Spleen (tissue), 13 donors: ENCODE measurements at regions of chr9 and their contacts with region 1.

Region 1: DNA sequence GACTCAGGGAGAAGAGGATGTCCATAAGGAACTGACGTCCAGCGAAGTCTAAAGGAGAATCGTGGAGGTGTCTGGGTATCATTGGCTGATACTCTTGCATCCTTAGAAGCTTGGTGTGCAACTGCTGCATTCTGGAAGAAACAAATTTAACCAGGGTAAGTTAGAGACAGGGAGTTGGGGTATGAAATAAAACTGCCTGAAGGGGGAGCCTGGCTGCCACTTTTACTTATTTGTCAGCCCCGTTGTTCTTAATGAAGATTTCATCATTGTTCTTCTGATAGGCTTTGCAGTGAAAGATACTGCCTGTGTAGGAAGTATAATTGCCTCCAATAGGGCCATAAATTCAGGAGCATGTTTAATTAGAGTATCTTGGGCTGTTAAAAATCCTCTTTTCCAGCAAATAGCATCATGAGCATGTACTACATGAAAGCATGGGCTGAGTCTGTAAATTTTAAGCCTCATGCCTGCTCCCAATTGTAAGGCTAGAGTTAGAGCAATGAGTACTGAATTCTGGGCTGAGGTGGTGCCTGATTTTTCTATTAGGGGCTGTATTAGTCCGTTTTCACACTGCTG is 1264.5 kb upstream of the ACO1 start:
- DNase-seq: no peak
- H3K4me3 ChIP-seq: no peak overlapping the region
- H3K27ac ChIP-seq: no peak overlapping the region
- H3K4me1 ChIP-seq: no peaks in the 10 kb centered on the region
- H3K27me3 ChIP-seq: no peaks in the 10 kb centered on the region
- CTCF ChIP-seq: peak; percentile 25 to 72 (median 56)
- POLR2A ChIP-seq: no peak

Region 2: GRCh38 chr9:31174681-31175080 is 54.7 kb after region 1 on chr9:
- intact Hi-C with region 1: no loop called
- DNase-seq: no peak
- H3K4me3 ChIP-seq: no peak overlapping the region
- H3K27ac ChIP-seq: no peak overlapping the region
- H3K4me1 ChIP-seq: no peaks in the 10 kb centered on the region
- H3K27me3 ChIP-seq: no peaks in the 10 kb centered on the region
- CTCF ChIP-seq: no peak
- POLR2A ChIP-seq: no peak

Region 3: GRCh38 chr9:32251539-32251938 is 1131.6 kb after region 1 on chr9:
- intact Hi-C with region 1: loop called (anchors 10 kb)
- DNase-seq: no peak
- H3K4me3 ChIP-seq: no peak overlapping the region
- H3K27ac ChIP-seq: no peak overlapping the region
- H3K4me1 ChIP-seq: peaks cover 0 to 12% (median 0%) of the 10 kb centered on the region in 6 donors
- H3K27me3 ChIP-seq: no peaks in the 10 kb centered on the region
- CTCF ChIP-seq: peak; percentile 18 to 76 (median 66)
- POLR2A ChIP-seq: no peak

Region 4: GRCh38 chr9:32350682-32351081 is 1230.7 kb after region 1 on chr9:
- intact Hi-C with region 1: loop called (anchors 10 kb)
- DNase-seq: no peak
- H3K4me3 ChIP-seq: no peak overlapping the region
- H3K27ac ChIP-seq: no peak overlapping the region
- H3K4me1 ChIP-seq: no peaks in the 10 kb centered on the region
- H3K27me3 ChIP-seq: no peaks in the 10 kb centered on the region
- CTCF ChIP-seq: peak in 2 of 11 experiments; percentile 22 to 38
- POLR2A ChIP-seq: no peak